Pancreas (tissue), 10 donors: ENCODE measurements at regions of chr1 and their contacts with region 1.

Region 1: DNA sequence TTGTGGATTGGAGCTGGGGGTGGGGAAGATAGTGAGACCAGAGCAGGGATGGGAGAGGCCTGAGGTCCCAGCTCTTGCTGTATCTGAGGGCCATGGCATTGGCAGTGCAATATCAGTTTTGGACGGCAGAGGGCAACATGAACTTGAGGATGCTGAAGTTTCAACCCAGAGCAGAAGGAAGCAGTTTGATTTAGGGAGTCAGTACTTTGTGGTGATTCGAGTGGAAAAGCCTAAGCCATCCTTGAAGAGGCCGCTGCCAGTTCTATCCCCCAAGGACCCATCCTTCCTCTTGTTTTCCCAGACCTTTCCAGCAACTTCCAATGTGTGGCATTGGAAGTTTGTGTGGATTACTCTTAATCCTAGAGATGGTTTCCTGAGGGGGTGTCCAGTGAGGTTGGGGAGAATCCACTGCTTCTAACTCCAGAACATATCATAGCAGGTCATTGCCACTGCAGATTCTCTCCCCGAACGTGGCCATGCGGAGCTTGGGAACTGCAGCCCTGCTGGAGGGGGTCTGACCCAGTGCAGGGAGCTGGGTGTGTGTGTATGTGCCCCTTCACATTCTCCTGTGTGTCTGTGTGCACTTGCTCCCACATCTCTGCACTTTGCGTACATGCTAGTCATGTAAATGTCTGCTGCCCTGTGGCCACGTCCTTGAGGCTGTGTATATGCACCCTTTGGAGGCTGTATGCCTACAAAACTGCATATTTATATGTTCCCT is 24.1 kb downstream of the SLC26A9 start:
- DNase-seq: peak; percentile 68 to 88 (median 82)
- ATAC-seq: peak; percentile 77 to 88 (median 86)
- H3K4me3 ChIP-seq: no peak overlapping the region
- H3K27ac ChIP-seq: no peak overlapping the region
- H3K4me1 ChIP-seq: peaks cover 9 to 24% (median 18%) of the 10 kb centered on the region in 3 donors
- H3K27me3 ChIP-seq: no peaks in the 10 kb centered on the region
- CTCF ChIP-seq: peak; percentile 73 to 87 (median 79)

Region 2: DNA sequence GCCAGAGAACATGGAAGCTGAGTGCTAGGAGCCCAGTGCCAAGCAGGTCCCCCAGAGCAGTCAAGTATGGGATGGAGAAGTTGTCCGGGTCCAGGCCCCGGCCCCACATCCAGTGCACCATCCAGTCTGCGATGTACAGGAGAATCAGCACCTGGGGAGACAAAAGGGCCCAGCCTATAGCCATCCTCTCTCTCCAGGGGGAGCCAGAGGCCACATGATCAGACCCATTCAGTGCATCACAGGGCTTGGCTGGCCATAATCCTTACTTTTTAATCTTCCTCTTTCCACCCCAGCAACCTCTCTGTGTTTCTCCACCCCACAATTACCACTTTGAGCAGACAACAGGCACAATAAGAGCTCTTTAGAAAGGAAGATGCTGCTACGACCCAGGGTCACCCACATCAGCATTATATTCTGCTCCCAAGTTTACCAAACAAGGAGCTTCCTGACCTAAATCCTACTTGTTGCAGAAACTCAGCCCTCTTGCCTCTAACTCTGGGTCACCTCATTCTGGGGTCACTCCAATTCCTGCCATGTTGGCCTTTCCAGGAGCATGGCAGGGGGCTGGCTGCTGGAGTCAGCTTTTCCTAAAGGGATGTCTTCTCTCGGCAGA is 127.5 kb before region 1 on chr1:
- intact Hi-C with region 1: loop called in 2 of 3 experiments (anchors 10 kb)
- DNase-seq: peak in 4 of 6 donors; percentile 55 to 78 (median 59)
- ATAC-seq: peak; percentile 72 to 94 (median 91)
- H3K4me3 ChIP-seq: no peak overlapping the region
- H3K27ac ChIP-seq: no peak overlapping the region
- H3K4me1 ChIP-seq: no peaks in the 10 kb centered on the region
- H3K27me3 ChIP-seq: no peaks in the 10 kb centered on the region
- CTCF ChIP-seq: peak; percentile 36 to 63 (median 56)

Region 3: DNA sequence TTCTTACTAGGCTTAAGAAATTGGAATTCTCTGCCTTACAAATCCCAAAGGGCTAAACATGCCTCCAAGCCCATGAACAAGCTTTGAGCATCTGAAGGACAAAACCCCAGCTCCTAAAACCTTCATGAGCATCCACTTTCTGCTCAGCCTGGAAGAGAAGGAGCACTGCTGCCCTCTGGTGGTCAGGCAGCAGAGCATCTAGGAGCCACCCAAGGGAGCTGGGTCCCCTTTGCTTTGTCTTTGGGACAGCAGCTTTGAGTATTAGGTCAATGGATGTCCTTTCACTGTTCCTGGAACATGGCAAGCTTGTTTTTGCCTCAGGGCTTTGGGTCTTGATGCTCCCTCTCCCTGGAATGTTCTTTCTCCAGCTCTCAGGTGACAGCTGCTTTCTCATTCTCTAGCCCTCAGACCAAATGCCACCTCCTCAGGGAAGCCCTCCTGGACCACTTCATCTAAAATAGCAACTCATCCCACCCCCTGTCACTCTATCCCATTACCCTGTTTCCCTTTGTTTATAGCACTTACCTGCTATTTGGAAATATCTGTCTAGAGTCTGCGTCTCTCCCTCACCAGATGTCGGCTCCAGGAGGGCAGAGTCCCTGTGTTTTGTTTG is 58.3 kb after region 1 on chr1:
- intact Hi-C with region 1: loop called (anchors 2 to 10 kb)
- DNase-seq: peak; percentile 62 to 93 (median 84)
- ATAC-seq: peak; percentile 90 to 93 (median 92)
- H3K4me3 ChIP-seq: no peak overlapping the region
- H3K27ac ChIP-seq: peak overlapping the region in 1 of 4 donors; percentile 34
- H3K4me1 ChIP-seq: no peaks in the 10 kb centered on the region
- H3K27me3 ChIP-seq: no peaks in the 10 kb centered on the region
- CTCF ChIP-seq: peak; percentile 88 to 94 (median 92)

Region 4: DNA sequence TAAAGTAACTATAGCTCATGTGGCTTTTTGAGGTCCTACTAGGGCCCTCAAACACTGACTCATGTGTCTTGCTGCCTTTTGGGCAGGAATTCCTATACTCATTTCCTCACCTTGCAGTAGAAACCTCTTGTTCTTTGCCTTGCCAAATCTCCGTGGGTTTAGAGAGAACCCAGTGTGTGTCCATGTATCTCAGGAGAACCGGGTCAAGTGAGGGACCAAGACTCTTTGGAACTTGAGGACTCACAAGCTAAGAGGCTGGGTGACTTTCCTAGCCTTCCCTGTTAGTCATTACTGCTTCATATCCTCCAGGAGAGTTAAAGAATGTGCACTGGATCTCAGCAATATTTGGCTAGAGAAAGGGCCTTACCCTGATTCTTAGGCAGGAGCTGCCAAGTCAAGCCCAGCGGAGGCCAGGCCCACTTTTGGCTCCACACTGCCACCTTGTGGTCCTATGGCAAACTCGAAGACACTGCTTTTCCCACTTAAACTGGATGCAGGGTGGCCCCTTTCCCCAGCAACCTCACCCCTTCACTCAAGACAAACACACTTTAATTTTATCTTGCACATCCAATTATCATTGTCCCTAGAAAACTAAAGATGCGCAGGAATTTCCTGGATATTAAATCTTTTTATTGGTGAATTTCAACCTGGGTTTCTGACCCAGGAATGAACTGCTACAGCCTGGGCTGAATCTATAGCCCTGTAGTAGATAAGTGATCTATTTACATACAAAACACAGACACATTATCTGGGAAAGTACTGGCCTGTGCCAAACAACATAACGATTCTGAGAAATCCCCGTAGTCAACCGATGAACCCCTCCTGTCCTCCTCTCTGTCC is 187.4 kb after region 1 on chr1:
- intact Hi-C with region 1: loop called in 1 of 3 experiments (anchors 10 kb)
- DNase-seq: peak; percentile 53 to 87 (median 81)
- ATAC-seq: peak; percentile 91 to 97 (median 93)
- H3K4me3 ChIP-seq: no peak overlapping the region
- H3K27ac ChIP-seq: no peak overlapping the region
- H3K4me1 ChIP-seq: no peaks in the 10 kb centered on the region
- H3K27me3 ChIP-seq: no peaks in the 10 kb centered on the region
- CTCF ChIP-seq: peak; percentile 65 to 81 (median 76)